ENCODE measurements at regions of chr1 and their contacts with region 1.

Region 1: DNA sequence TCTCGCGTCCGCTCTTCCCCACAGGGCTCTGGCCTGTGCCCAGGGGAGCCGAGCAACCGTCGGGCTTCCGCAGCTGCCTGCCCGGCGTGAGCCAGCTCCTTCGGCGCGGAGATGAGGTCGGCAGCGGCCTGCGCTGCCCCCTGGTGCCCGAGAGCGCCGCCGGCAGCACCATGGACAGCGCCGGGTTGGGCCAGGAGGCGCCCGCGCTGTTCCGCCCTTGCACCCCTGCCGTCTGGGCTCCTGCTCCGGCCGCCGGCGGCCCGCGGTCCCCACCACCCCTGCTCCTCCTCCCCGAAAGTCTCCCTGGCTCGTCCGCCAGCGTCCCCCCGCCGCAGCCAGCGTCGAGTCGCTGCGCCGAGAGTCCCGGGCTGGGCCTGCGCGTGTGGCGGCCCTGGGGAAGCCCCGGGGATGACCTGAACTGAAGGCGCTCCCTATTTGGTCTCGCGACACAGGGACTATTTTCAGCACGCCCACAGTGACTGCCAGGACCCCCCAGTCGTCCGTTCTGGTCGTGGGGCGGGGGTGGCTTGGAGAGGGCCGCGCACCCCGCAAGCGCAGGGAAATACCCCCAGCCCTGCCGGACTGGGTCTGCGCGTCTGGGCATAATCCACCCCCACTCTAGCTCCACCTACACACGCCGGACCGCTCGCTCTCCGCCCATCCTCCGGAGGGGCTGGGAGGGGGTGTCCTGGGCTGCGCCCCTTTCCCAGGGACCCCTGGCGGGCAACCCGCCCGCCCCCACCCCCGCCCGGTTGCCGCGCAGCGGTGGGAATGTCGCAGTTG is 1.3 kb downstream of the HES3 start:
- DNase-seq: peak; percentile 57
- ATAC-seq: peak; percentile 60
- H3K4me3 ChIP-seq: peak overlapping the region; percentile 45 to 55
- H3K27ac ChIP-seq: no peak overlapping the region
- H3K4me1 ChIP-seq: peaks cover 19 to 51% of the 10 kb centered on the region in 2 experiments; a peak in 3 of 4 replicates
- H3K27me3 ChIP-seq: no peaks in the 10 kb centered on the region
- CTCF ChIP-seq: peak; percentile 76 to 87 (median 84)
- POLR2A ChIP-seq: no peak
- RAD21 ChIP-seq: peak; percentile 96

Region 2: DNA sequence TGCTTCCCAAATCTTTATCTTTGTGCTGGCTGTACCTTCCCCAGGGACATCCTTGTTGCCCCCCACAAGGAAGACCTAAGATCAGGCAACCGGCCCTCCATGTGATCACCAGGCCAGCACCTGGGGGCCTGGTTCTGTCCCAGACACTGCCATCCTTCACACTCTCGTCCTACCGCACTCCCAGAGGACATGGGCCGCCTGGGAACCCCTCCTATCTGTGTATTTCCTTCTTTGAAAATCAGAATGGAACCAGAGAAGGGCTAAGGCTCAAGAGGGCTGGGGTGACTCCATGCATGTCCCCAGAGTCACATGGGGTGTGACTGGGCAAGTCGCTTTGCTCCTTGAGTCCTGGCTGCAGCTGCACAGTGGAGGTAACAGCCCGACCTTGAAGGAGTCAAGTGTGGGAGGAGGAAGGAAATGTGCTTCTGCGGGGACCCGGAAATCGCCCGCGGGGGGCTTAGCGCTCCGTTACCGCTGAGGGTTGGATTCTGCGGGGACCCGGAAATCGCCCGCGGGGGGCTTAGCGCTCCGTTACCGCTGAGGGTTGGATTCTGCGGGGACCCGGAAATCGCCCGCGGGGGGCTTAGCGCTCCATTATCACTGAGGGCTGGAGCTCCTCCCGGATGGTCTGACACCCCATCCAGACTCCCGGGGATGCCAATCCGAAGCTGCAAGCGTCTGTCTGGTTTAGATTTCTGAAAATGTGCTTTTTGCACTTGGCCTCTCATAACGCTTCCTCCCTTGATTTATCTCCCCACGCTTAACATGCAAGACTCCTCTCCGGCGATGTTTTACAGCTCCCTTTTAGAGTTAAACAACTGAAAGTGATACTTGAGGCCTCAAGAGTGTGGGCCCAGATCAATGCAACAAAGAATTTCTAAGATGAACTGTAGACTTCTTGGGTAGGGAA is 531.9 kb before region 1 on chr1:
- CTCF ChIA-PET with region 1: no interaction called
- POLR2A ChIA-PET with region 1: no interaction called
- RAD21 ChIA-PET with region 1: no interaction called
- intact Hi-C with region 1: no loop called
- DNase-seq: no peak
- ATAC-seq: no peak
- H3K4me3 ChIP-seq: no peak overlapping the region
- H3K27ac ChIP-seq: no peak overlapping the region
- H3K4me1 ChIP-seq: peaks cover 3 to 13% of the 10 kb centered on the region in 2 experiments; a peak in 3 of 4 replicates
- H3K27me3 ChIP-seq: no peaks in the 10 kb centered on the region
- CTCF ChIP-seq: no peak
- POLR2A ChIP-seq: no peak
- RAD21 ChIP-seq: no peak

Region 3: GRCh38 chr1:6052543-6053205 is 192.6 kb before region 1 on chr1:
- CTCF ChIA-PET with region 1: interaction called, 11 read pairs
- POLR2A ChIA-PET with region 1: no interaction called
- RAD21 ChIA-PET with region 1: interaction called, 5 read pairs
- intact Hi-C with region 1: loop called (anchors 1 kb)
- DNase-seq: no peak
- ATAC-seq: peak; percentile 76
- H3K4me3 ChIP-seq: no peak overlapping the region
- H3K27ac ChIP-seq: no peak overlapping the region
- H3K4me1 ChIP-seq: no peaks in the 10 kb centered on the region
- H3K27me3 ChIP-seq: no peaks in the 10 kb centered on the region
- CTCF ChIP-seq: peak; percentile 54 to 77 (median 65); a peak in 5 of 6 replicates
- POLR2A ChIP-seq: no peak
- RAD21 ChIP-seq: peak; percentile 82

Region 4: GRCh38 chr1:6199298-6200187 is 45.7 kb before region 1 on chr1 and contains the start of gene RPL22:
- CTCF ChIA-PET with region 1: interaction called, 29 read pairs
- POLR2A ChIA-PET with region 1: no interaction called
- RAD21 ChIA-PET with region 1: no interaction called
- intact Hi-C with region 1: loop called (anchors 2 kb)
- DNase-seq: peak; percentile 98
- ATAC-seq: peak; percentile 94
- H3K4me3 ChIP-seq: peak within 1 kb of the TSS; percentile 82 to 96
- H3K27ac ChIP-seq: peak within 1 kb of the TSS; percentile 94
- H3K4me1 ChIP-seq: peaks cover 22 to 41% of the 10 kb centered on the region in 2 experiments
- H3K27me3 ChIP-seq: no peaks in the 10 kb centered on the region
- CTCF ChIP-seq: no peak
- POLR2A ChIP-seq: peak; percentile 67
- RAD21 ChIP-seq: no peak
- total RNA-seq, gene RPL22: 456 TPM

Region 5: DNA sequence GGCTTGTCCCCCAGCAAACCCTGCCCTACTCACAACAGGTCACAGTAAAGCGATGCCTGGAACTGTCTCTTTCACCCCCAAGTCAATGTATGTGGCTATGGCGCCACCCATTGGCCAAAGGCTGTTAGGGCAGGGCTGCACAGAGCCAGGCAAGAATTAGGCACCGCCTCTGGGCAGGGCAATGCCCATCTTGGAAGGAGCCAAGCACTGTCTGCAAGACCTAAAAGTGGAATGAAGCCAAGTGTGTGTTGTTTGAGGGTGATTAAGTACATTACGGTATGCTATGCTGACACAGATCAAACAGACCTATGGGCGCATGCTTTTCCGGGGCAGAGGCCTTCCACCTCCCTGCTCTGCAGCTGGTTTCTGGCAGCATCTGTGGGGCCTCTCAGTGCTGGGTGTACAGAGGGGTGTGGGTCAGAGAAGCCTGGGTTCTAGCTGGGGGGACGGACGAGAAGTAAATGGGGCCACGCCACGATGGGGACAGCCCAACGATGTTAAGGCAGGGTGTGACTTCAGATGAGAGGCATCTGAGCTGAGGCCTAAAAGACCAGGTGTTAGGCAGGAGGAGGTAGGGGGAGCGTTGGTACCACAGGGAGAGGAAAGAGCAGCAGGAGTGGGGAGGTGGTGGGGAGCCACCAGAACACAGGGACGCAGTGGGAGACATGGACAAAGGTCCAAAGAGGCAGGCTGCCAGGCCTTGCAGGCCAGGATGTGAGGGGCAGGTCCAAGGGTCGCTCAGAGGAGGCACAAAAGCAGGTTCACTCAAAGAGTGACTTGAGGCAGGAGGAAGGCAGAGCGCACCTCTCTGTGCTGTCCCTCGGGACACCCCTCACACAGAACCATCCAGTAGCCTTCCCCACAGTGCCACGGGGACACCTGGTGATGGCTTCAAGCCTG is 98.5 kb after region 1 on chr1:
- CTCF ChIA-PET with region 1: interaction called, 29 read pairs
- POLR2A ChIA-PET with region 1: no interaction called
- RAD21 ChIA-PET with region 1: interaction called in 1 of 2 experiments, 10 read pairs
- intact Hi-C with region 1: loop called (anchors 1 kb)
- DNase-seq: peak; percentile 45
- ATAC-seq: peak; percentile 95
- H3K4me3 ChIP-seq: no peak overlapping the region
- H3K27ac ChIP-seq: peak overlapping the region; percentile 5; the same call in 1 of the 2 replicates
- H3K4me1 ChIP-seq: peaks cover 4 to 14% of the 10 kb centered on the region in 2 experiments; a peak in 2 of 4 replicates
- H3K27me3 ChIP-seq: no peaks in the 10 kb centered on the region
- CTCF ChIP-seq: peak; percentile 86 to 98 (median 97)
- POLR2A ChIP-seq: no peak
- RAD21 ChIP-seq: peak; percentile 95

Region 6: DNA sequence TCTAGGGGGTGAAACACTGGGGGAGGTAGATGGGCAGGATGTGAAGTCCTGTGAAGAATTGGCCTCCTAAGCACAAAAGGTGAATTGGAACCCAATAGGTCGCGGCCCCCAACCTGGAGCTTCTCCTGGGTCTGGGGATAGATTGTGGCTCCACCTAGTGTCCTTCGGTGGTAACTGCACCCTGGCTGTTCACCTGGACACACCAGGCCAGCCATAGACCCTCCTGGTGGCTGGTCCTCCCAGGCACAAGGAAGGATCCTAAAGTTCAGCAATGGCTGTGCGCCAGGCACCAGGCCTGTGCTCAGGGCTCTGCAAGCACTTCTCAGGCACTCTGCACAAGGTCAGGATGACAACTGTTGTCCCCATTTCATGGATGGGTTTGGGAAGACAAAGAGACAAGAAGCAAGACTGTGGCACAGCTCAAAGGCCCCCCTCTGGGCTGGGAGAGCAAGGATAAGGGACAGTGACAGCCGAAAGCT is 192.8 kb after region 1 on chr1:
- CTCF ChIA-PET with region 1: interaction called, 39 read pairs
- POLR2A ChIA-PET with region 1: no interaction called
- RAD21 ChIA-PET with region 1: interaction called, 5 to 7 read pairs
- intact Hi-C with region 1: loop called (anchors 2 kb)
- DNase-seq: no peak
- ATAC-seq: peak; percentile 52
- H3K4me3 ChIP-seq: no peak overlapping the region
- H3K27ac ChIP-seq: no peak overlapping the region
- H3K4me1 ChIP-seq: peaks cover 8 to 27% of the 10 kb centered on the region in 2 experiments
- H3K27me3 ChIP-seq: no peaks in the 10 kb centered on the region
- CTCF ChIP-seq: peak in 2 of 3 experiments; percentile 93; a peak in 4 of 6 replicates
- POLR2A ChIP-seq: no peak
- RAD21 ChIP-seq: no peak

Region 7: GRCh38 chr1:7207875-7208646 is 962.8 kb after region 1 on chr1:
- CTCF ChIA-PET with region 1: no interaction called
- POLR2A ChIA-PET with region 1: no interaction called
- RAD21 ChIA-PET with region 1: no interaction called
- intact Hi-C with region 1: loop called (anchors 5 kb)
- DNase-seq: peak; percentile 65
- ATAC-seq: peak; percentile 100
- H3K4me3 ChIP-seq: no peak overlapping the region
- H3K27ac ChIP-seq: no peak overlapping the region
- H3K4me1 ChIP-seq: peaks cover 0 to 3% of the 10 kb centered on the region in 2 experiments; a peak in 1 of 4 replicates
- H3K27me3 ChIP-seq: no peaks in the 10 kb centered on the region
- CTCF ChIP-seq: peak; percentile 89 to 94 (median 92)
- POLR2A ChIP-seq: no peak
- RAD21 ChIP-seq: peak; percentile 93